ENCODE measurements at regions of chr17 and their contacts with region 1.

Region 1: GRCh38 chr17:1324201-1324771 is 44.8 kb downstream of the TRARG1 start:
- DNase-seq: no peak
- ATAC-seq: no peak
- H3K4me3 ChIP-seq: no peak overlapping the region
- H3K4me3 Mint-ChIP-seq: no peak overlapping the region
- H3K27ac ChIP-seq: no peak overlapping the region
- H3K27ac Mint-ChIP-seq: peak overlapping the region in 1 of 2 donors; percentile 27
- H3K4me1 ChIP-seq: no peaks in the 10 kb centered on the region
- H3K4me1 Mint-ChIP-seq: no peaks in the 10 kb centered on the region
- H3K27me3 ChIP-seq: peaks cover 0 to 35% of the 10 kb centered on the region in 2 experiments
- H3K27me3 Mint-ChIP-seq: peaks cover 3 to 17% of the 10 kb centered on the region in 2 donors

Region 2: GRCh38 chr17:1340371-1340770 is 16.1 kb after region 1 on chr17:
- CTCF ChIA-PET with region 1: no interaction called
- POLR2A ChIA-PET with region 1: no interaction called
- DNase-seq: no peak
- ATAC-seq: peak in 1 of 4 experiments; percentile 29
- H3K4me3 ChIP-seq: no peak overlapping the region
- H3K4me3 Mint-ChIP-seq: no peak overlapping the region
- H3K27ac ChIP-seq: no peak overlapping the region
- H3K27ac Mint-ChIP-seq: no peak overlapping the region
- H3K4me1 ChIP-seq: no peaks in the 10 kb centered on the region
- H3K4me1 Mint-ChIP-seq: peaks cover 1 to 3% (median 1%) of the 10 kb centered on the region in 3 donors
- H3K27me3 ChIP-seq: no peaks in the 10 kb centered on the region
- H3K27me3 Mint-ChIP-seq: no peaks in the 10 kb centered on the region

Region 3: DNA sequence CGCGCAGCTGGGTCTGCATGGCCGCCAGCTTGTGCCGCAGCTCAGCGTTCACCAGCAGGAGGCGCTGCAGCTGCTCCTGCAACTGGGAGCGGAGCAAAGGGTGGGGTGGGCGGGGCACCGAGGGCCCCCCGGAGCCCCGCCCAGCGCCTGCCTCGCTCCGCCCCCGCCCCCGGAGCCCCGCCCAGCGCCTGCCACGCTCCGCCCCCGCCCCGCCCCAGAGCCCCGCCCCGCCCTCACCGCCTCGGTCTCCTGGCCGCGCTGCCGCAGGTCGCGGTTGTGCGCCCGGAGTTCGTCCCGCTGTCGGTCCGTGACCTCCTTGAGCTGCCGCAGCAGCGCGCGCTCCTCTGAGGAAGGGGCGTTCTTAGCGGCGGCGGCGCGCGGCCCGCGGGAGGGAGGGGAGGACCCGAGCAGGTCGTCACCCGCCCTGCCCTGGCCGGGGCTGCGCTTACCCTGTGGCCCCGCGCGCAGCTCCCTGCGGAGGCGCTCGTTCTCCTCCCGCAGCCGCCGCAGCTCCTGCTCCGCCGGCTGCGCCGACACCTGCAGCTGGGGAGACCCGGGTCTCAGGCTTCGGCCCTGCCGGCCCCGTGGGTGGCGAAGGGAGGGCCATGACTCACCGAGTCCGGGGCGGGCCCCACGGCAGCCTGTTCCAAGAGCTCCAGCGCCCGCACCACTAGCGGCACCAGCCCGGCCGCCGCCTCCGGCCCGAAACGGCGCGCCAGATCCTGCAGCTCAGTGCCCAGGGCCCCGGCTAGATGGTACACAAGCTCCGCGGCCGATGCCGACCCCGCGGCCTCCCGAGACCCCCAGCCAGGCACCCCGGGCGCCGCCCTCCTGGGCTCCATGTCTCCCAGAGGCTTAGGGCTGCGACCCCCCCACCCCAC is 324.9 kb after region 1 on chr17:
- CTCF ChIA-PET with region 1: no interaction called
- POLR2A ChIA-PET with region 1: interaction called in 1 of 2 experiments, 10 read pairs
- DNase-seq: peak; percentile 84 to 99 (median 92)
- ATAC-seq: peak; percentile 79 to 84 (median 80)
- H3K4me3 ChIP-seq: peak overlapping the region; percentile 40 to 41
- H3K4me3 Mint-ChIP-seq: peak overlapping the region; percentile 58 to 68 (median 65)
- H3K27ac ChIP-seq: peak overlapping the region; percentile 41
- H3K27ac Mint-ChIP-seq: no peak overlapping the region
- H3K4me1 ChIP-seq: peaks cover 11 to 41% of the 10 kb centered on the region in 2 experiments
- H3K4me1 Mint-ChIP-seq: peaks cover 18 to 34% (median 22%) of the 10 kb centered on the region in 3 donors
- H3K27me3 ChIP-seq: peaks cover 0 to 12% of the 10 kb centered on the region in 2 experiments
- H3K27me3 Mint-ChIP-seq: no peaks in the 10 kb centered on the region

Measured in T-cell (primary cell).